Activated naive CD4-positive, alpha-beta T cell treated with anti-CD3 and anti-CD28 coated beads for 36 hours (primary cell): ENCODE measurements at regions of chr6 and their contacts with region 1.

Region 1: GRCh38 chr6:90586836-90587638 is at the start of gene MAP3K7:
- DNase-seq: peak; percentile 98
- H3K4me3 Mint-ChIP-seq: peak within 1 kb of the TSS; percentile 99
- H3K27ac Mint-ChIP-seq: peak within 1 kb of the TSS; percentile 99
- H3K4me1 Mint-ChIP-seq: peaks cover 40% of the 10 kb centered on the region
- H3K27me3 Mint-ChIP-seq: no peaks in the 10 kb centered on the region
- total RNA-seq, gene MAP3K7: 23.2 to 23.6 TPM

Region 2: GRCh38 chr6:89145787-89146646 is 1441.0 kb before region 1 on chr6 and contains the start of gene PM20D2:
- CTCF ChIA-PET with region 1: no interaction called
- intact Hi-C with region 1: loop called (anchors 2 kb)
- DNase-seq: peak; percentile 59
- H3K4me3 Mint-ChIP-seq: peak within 1 kb of the TSS; percentile 90
- H3K27ac Mint-ChIP-seq: peak within 1 kb of the TSS; percentile 96
- H3K4me1 Mint-ChIP-seq: peaks cover 27% of the 10 kb centered on the region
- H3K27me3 Mint-ChIP-seq: no peaks in the 10 kb centered on the region
- total RNA-seq, gene PM20D2: 11.6 to 12.7 TPM

Region 3: DNA sequence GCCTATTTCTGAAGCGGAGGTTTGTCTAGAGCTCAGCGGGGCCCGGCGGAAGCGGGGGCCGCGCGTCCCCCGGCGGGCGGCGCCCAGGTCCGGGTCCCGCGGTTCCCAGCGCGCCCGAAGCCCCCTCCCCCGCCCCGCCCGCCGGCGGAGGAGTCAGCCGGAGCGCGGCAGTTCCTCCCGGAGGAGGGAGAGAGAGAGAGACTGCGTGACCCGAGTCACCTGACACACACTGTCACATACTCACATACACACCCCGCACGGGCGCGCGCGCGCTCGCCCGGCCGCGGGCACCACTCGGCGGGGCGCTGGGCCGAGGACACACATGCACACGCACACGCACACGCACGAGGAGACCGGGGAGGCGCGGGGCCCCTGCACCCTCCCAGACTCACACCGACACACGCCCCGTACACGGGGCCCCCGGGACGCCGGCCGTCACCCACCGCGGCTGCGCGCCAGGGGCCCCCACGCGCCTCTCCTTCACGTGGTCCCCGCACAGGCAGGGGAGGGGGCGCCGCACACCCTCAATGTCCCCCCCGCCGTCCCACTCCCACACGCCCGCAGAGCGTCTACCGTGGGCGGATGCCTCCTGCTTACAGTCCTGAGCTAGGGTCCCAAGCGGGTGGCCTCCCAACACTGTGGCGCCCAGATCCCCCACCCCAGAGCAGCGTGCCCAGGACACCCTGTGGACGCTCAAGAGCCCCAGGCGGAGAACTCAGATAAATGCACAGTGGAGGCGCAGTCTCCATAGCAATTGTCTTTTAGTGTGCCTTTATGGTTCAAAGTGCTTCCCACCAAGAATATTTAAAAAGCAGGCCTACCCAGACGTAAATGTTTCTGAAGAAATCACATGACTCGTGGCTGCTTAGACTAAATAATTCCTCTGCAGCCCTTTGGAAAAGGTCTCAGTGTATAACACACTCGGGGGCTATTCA is 1174.7 kb before region 1 on chr6 and contains the start of gene RRAGD:
- CTCF ChIA-PET with region 1: no interaction called
- intact Hi-C with region 1: loop called (anchors 10 kb)
- DNase-seq: peak; percentile 67
- H3K4me3 Mint-ChIP-seq: peak within 1 kb of the TSS; percentile 91
- H3K27ac Mint-ChIP-seq: peak within 1 kb of the TSS; percentile 31
- H3K4me1 Mint-ChIP-seq: peaks cover 23% of the 10 kb centered on the region
- H3K27me3 Mint-ChIP-seq: peaks cover 4% of the 10 kb centered on the region
- total RNA-seq, gene RRAGD: 11.3 to 13.2 TPM

Region 4: DNA sequence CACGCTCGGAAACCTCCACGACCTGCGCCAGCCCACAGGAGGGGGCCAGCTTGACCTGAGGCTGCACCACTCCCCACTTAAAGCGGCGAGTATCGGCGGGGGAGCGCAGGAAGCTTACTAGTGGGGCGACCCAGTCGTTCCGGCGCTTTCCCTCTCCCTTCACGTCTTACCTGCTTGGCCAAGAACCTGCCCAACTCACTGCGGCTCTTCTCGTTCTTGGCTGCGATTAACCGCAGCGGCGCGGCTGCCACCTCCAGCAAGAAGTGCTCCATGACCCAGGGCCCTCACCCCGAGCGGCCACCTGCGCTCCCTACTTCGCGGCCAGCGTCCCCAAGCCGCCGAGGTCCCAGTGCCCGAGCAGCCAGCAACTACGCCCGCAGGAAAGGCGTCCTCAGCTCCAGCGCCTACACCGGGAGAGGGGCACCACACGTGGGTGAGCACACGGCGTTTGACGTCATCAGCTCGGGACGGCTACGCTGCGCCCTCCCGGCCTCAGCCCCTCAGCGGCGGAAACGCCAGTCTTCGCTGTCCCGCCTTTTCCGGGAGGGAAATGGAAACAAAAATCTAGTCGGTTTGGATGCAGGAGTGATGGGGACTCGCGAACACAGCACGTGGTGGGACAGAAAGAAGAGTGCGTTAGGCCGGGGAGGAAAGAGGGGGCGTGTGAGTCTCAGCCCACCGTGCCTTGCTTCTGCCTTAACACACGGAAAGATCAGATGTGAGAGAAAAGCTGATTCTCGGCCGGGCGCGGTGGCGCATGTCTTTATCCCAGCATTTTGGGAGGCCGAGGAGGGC is 767.5 kb before region 1 on chr6 and contains the start of gene MDN1:
- CTCF ChIA-PET with region 1: no interaction called
- intact Hi-C with region 1: loop called (anchors 1 kb)
- DNase-seq: peak; percentile 94
- H3K4me3 Mint-ChIP-seq: peak within 1 kb of the TSS; percentile 82
- H3K27ac Mint-ChIP-seq: peak within 1 kb of the TSS; percentile 88
- H3K4me1 Mint-ChIP-seq: peaks cover 36% of the 10 kb centered on the region
- H3K27me3 Mint-ChIP-seq: no peaks in the 10 kb centered on the region
- total RNA-seq, gene MDN1: 42.1 to 52.1 TPM

Region 5: GRCh38 chr6:89940225-89941027 is 646.6 kb before region 1 on chr6:
- CTCF ChIA-PET with region 1: no interaction called
- intact Hi-C with region 1: loop called (anchors 5 kb)
- DNase-seq: peak; percentile 86
- H3K4me3 Mint-ChIP-seq: no peak overlapping the region
- H3K27ac Mint-ChIP-seq: peak overlapping the region; percentile 74
- H3K4me1 Mint-ChIP-seq: peaks cover 70% of the 10 kb centered on the region
- H3K27me3 Mint-ChIP-seq: no peaks in the 10 kb centered on the region

Region 6: DNA sequence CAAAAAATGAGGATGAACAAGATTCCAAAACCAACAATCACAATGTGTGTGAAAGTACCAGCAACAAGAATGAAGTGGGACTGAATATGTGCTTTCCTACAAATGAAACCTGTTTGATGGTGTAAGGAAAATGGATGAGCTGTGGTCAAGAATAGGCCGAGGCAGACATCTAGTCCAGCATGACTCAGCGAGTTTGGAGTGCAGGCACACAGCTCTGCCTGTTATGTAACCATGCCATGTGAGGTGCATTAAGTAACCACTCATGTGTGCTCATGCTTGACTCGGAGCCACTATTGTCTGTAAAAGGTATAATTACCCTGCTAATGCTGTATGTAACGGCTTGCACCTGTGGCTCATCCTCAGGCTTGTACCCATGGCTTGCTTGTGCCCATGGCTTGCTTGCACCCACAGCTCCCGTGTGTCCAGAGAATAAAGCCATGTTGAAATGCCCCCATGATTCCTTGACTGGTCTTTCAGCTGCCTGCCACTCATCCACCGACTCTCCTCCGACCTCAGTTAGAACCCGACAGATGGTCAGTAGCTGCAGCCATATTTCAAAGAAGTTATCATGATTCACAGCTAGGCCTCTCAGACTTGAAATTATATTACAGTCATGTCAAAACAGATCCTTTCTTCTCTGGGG is 389.1 kb before region 1 on chr6:
- CTCF ChIA-PET with region 1: no interaction called
- intact Hi-C with region 1: loop called (anchors 10 kb)
- DNase-seq: peak; percentile 47
- H3K4me3 Mint-ChIP-seq: no peak overlapping the region
- H3K27ac Mint-ChIP-seq: peak overlapping the region; percentile 80
- H3K4me1 Mint-ChIP-seq: peaks cover 92% of the 10 kb centered on the region
- H3K27me3 Mint-ChIP-seq: no peaks in the 10 kb centered on the region

Region 7: GRCh38 chr6:90677440-90677839 is 90.4 kb after region 1 on chr6:
- CTCF ChIA-PET with region 1: no interaction called
- intact Hi-C with region 1: no loop called
- DNase-seq: no peak
- H3K4me3 Mint-ChIP-seq: no peak overlapping the region
- H3K27ac Mint-ChIP-seq: no peak overlapping the region
- H3K4me1 Mint-ChIP-seq: no peaks in the 10 kb centered on the region
- H3K27me3 Mint-ChIP-seq: peaks cover 3% of the 10 kb centered on the region